Posterior cingulate gyrus (tissue), 11 donors: ENCODE measurements at regions of chr1 and their contacts with region 1.

Region 1: GRCh38 chr1:226293553-226293920 is 15.4 kb downstream of the LIN9 start:
- DNase-seq: no peak

Region 2: DNA sequence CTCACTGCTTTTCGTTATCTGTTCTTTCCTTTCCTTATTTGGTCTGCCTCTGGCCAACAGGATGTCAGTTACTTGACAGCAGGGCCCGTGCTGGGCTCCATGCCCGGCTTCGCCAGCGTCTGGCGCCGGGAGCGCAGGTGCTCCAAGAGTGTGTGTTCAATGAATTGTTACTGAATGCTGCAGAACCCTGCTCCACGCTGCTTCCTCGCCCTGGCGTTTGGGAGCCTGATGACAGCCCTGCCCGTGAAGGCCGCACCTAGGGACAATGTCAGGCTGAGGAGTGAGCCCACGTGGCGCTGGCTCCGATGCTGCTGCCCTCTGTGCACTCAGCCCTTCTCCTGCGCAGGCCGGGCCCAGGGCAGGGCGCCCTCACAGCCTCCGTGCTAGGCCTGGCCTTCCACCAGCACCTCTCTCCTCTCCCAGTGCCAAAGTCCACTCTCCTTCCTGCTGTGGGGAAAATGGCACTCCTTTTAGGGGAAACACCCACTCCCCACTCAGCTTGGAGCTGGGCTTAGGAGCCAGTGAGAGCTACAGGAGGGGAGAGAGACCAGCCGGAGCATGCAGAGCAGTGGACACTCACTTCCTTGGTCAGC is 158.4 kb before region 1 on chr1:
- intact Hi-C with region 1: no loop called
- DNase-seq: peak in 5 of 10 donors; percentile 26 to 93 (median 35)

Region 3: GRCh38 chr1:226223786-226224244 is 69.7 kb before region 1 on chr1:
- intact Hi-C with region 1: loop called (anchors 2 kb)
- DNase-seq: no peak

Region 4: DNA sequence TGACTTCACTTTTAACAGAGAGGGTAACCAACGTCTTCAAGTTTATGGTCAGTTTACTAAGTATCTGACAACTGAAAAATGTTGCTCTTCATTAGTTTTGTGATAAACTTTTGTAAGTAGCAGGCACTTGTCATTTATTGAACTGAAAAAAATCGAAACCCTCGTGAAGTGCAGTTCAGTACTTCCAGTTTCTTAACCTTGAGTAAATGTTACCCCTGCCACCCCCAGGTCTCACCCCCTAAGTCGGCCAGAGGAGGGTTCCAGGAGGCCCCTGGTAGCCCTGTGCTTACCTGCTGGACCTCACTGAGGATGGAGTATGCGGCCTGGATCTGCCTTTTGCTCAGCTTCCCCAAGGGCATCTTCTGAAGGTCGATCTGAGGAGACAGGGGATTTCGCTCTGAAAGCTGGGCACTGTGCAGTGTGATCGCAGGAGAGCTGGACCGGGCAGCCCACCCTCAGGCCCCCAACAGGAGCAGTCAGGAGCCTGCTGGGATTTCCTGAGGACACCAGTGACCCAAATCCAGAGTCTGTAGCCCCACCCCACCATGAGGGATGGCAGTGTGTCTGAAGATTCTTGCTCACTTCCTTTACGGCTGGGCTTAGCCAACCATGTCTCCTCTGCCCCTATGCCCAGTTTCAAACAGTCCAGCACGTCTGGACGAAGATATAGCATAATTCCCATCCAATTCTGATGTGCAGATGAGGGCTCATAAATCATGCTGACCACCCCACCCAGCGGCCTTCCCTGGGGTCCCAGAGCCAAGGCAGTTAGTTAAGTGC is 76.8 kb after region 1 on chr1:
- intact Hi-C with region 1: no loop called
- DNase-seq: peak in 1 of 10 donors; percentile 46